GM10248 (cell line): ENCODE measurements at regions of chr3 and their contacts with region 1.

Region 1: DNA sequence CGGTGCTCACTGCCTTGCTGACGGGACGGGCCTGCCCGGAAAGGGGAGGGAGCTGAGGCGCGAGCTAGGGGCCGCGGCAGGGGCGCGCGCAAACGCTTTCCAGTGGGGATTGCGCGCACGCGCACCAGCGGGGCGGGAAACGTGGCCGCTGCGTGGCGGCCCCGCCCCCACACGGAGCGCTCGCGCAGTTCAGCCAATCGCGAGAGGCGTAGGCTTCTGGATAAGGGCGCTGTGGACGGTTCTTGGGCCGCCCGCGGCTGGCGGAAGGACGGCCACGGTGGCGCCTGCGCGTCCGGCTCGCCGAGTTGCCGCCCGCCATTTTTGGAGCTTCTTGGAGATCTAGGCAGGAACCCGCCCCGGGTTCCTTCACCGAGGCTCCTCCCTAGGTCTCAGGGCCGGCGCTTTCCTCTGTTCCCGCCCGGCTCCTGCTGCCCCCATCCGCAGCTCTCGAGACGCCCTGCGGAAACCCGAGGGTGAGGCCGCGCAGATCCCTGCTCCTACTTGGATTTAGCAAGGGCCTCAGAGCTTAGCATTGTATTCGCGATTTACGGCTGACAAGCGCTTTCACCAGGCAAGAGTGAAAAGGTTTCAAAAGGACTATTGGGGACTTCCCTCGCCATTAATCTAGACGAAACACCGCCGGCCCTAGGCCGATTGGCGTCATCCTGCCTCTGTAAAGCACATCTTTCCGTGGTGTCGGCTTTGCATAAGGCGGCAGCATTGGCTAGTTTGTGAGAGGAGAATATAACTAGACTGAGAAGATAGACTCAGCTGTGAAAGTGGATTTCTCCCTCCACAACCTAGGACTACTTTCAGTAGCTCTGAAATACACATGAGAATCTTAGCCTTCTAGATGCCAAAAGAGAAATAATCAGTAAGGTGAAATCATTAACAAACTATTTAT is 496 bp upstream of the STAG1 start:
- DNase-seq: peak; percentile 93
- CTCF ChIP-seq: peak; percentile 41

Region 2: GRCh38 chr3:136196401-136197158 is 556.1 kb before region 1 on chr3:
- CTCF ChIA-PET with region 1: interaction called, 13 read pairs
- POLR2A ChIA-PET with region 1: interaction called, 30 read pairs
- DNase-seq: peak; percentile 98
- CTCF ChIP-seq: no peak

Region 3: GRCh38 chr3:136396916-136397315 is 355.8 kb before region 1 on chr3:
- CTCF ChIA-PET with region 1: interaction called, 47 read pairs
- POLR2A ChIA-PET with region 1: no interaction called
- DNase-seq: no peak
- CTCF ChIP-seq: no peak

Region 4: DNA sequence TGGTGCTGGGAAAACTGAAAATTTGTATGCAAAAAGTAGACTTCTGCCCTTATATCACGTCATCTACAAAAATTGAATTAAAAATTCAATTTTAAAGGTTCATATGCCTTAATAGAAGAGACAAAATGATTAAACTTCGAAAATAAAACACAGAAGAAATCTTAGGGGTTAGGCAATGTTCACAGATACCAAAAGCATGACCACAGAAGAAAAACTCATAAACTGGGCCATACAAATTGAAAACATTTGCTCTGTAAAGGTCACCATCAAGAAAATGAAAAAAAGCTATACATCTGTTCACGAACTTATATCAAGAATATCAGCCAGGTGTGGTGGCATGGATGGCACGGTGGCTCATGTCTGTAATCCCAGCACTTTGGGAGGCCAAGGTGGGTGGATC is 257.5 kb before region 1 on chr3:
- CTCF ChIA-PET with region 1: no interaction called
- POLR2A ChIA-PET with region 1: no interaction called
- DNase-seq: no peak
- CTCF ChIP-seq: no peak

Region 5: GRCh38 chr3:136624894-136625815 is 127.5 kb before region 1 on chr3:
- CTCF ChIA-PET with region 1: no interaction called
- POLR2A ChIA-PET with region 1: no interaction called
- DNase-seq: no peak
- CTCF ChIP-seq: no peak

Region 6: GRCh38 chr3:136639069-136639468 is 113.6 kb before region 1 on chr3:
- CTCF ChIA-PET with region 1: no interaction called
- POLR2A ChIA-PET with region 1: no interaction called
- DNase-seq: no peak
- CTCF ChIP-seq: no peak

Region 7: GRCh38 chr3:136728918-136729317 is 23.8 kb before region 1 on chr3:
- CTCF ChIA-PET with region 1: interaction called, 25 read pairs
- POLR2A ChIA-PET with region 1: no interaction called
- DNase-seq: no peak
- CTCF ChIP-seq: no peak

Region 8: DNA sequence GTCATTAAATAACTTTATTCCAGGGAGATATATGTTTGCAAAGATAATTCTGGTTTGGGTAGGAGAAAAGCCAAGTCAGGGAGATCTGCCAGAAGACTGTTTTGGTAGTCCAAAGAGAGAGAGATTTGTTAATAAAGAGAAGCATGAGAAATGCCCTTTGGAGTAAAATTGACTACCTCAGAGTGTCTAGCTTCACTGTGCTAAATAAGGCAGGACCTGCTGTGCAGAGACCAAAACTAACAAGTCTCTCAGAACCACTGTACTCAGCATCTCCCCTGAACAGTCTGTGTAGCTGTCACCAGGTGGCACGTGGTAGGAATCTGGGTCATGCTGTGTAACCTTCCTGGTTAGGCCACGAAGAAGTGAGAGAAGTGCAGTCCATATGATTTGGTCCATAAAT is 34.7 kb after region 1 on chr3:
- CTCF ChIA-PET with region 1: interaction called, 11 read pairs
- POLR2A ChIA-PET with region 1: interaction called, 3 read pairs
- DNase-seq: peak; percentile 47
- CTCF ChIP-seq: no peak

Region 9: DNA sequence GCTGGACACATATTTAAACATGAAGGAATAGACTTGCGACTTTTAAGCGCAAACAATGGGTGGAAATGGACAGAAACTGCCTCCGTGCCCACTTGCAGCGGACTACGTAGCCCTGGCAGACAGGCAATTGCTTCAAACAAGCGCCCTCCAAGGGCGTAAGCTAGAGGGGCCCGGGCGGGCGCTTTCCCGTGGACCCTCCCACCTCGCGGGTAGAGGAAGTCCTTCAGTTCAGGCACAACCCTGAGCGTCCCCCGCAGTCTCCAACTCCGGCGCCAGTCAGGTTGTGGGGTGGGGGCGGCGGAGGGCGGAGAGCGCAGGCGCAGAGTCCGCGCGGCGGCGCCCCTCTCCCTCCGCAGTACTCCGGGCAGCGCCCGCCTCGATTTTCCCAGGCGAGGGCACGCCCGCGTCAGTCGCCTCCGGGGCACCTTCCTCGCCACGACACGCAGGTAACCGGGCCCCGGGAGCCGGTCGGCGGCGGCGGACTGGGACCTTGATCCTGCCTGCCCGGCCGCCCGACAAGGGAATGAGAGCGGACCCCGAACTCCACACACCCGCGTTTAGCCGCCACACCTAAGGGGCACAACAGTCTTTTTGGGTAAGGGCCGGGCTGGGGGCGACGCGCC is 66.2 kb after region 1 on chr3 and contains the start of gene SLC35G2:
- CTCF ChIA-PET with region 1: no interaction called
- POLR2A ChIA-PET with region 1: no interaction called
- DNase-seq: peak; percentile 59
- CTCF ChIP-seq: no peak

Region 10: DNA sequence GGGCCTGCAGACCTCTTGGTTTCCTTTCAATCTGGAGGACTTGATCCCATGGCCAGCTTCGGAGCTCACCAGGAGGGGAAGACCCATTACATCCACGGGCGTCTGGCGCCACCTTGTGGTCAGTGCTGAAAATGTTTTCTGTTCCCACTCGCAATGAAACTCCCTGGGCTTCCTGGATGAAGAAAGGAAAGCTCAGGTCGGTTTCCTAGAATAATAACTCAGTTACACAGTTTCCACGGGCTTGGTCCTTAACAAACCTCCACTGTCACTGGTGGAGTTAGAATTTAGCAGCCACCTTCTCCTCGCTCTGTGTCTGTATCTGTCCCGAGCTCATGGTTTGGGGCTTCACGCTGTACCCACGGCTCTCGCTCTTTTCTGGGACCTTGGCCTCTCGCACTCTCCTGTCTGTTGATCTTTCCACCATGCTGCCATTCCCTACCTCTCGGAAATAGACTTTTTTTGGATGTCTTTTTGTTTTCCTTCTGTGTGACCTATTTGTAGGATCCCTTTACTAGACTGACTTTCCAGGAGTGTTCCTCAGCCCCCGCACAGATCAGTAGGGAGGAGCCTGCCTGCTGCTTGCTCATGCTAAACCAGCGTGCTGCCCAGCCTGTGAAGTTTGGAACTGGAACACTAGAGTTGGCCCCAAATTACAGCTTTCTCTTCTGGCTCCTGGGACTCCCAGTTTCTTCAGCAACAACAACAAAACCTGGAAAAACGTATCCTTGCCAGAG is 261.4 kb after region 1 on chr3:
- CTCF ChIA-PET with region 1: interaction called, 90 read pairs
- POLR2A ChIA-PET with region 1: interaction called, 9 read pairs
- DNase-seq: peak; percentile 82
- CTCF ChIP-seq: peak; percentile 78